SK-N-SH (cell line): ENCODE measurements at regions of chr1 and their contacts with region 1.

Region 1: GRCh38 chr1:92310185-92310597 is 11.3 kb downstream of the RPAP2 start:
- DNase-seq: peak; percentile 39
- H3K4me3 ChIP-seq: no peak overlapping the region
- H3K27ac ChIP-seq: no peak overlapping the region
- H3K4me1 ChIP-seq: no peaks in the 10 kb centered on the region
- H3K27me3 ChIP-seq: no peaks in the 10 kb centered on the region
- CTCF ChIP-seq: peak; percentile 77
- EP300 ChIP-seq: no peak
- RAD21 ChIP-seq: peak; percentile 64

Region 2: DNA sequence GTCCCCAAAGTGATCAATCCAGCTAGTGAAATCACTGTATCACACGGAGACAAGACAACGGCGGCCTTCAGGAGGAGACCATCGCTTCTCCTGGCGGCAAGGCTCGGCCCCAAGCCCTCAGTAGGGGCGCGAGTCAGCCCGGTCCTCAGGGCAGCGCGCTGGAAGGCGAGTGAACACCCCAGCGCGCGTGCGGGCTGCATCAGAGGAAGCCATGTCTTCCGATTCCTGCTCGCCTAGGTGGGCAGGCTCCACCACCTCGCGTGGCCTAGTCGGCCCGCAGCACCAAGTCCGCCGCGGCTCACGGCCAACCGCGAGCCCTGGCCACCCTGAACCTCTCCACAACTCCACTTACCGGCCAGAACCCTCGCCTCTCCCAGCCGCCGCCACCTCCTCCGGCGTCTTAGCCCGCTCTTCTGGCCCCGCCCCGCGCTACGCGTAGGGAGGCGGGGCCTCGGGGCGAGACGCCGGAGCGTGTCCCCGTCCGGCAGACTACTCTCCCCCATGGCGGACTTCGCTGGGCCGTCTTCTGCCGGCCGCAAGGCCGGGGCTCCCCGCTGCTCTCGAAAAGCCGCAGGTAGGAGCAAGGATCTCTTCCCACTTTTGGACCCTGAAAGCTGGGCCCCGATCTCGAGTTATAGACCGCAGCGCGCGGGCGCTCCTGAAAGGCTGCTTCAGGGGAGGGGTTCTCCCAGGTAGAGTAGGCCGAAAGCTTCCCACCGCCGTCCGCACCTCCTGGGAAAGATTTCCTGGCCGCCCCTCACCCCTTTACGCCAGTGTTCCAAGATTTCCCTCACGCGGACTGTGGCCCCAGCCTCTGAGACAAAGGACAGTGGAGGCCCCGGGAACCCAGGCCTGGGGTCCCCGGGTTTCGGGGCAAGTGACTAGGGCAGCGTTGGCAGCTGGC is 11.4 kb before region 1 on chr1 and contains the starts of genes GLMN and RPAP2:
- CTCF ChIA-PET with region 1: interaction called, 21 read pairs
- POLR2A ChIA-PET with region 1: no interaction called
- DNase-seq: peak; percentile 92
- H3K4me3 ChIP-seq: peak within 1 kb of the TSS; percentile 92 to 94
- H3K27ac ChIP-seq: peak within 1 kb of the TSS; percentile 88 to 97
- H3K4me1 ChIP-seq: peaks cover 4 to 8% of the 10 kb centered on the region in 2 experiments; a peak in 2 of 4 replicates
- H3K27me3 ChIP-seq: no peaks in the 10 kb centered on the region
- CTCF ChIP-seq: 0 out of 2 replicates have a peak, but pooled peaks have one; percentile 19
- EP300 ChIP-seq: no peak
- RAD21 ChIP-seq: no peak
- polyA plus RNA-seq, gene GLMN: 2.3 and 3.6 TPM in 2 replicates
- polyA plus RNA-seq, gene RPAP2: 3.4 and 5.2 TPM in 2 replicates

Region 3: GRCh38 chr1:92623187-92623778 is 313.1 kb after region 1 on chr1:
- CTCF ChIA-PET with region 1: interaction called, 11 read pairs
- POLR2A ChIA-PET with region 1: no interaction called
- DNase-seq: peak; percentile 27
- H3K4me3 ChIP-seq: no peak overlapping the region
- H3K27ac ChIP-seq: no peak overlapping the region
- H3K4me1 ChIP-seq: no peaks in the 10 kb centered on the region; a peak in 1 of 4 replicates
- H3K27me3 ChIP-seq: no peaks in the 10 kb centered on the region
- CTCF ChIP-seq: peak; percentile 65
- EP300 ChIP-seq: no peak
- RAD21 ChIP-seq: peak; percentile 69